ENCODE measurements at regions of chr1 and their contacts with region 1.

Region 1: DNA sequence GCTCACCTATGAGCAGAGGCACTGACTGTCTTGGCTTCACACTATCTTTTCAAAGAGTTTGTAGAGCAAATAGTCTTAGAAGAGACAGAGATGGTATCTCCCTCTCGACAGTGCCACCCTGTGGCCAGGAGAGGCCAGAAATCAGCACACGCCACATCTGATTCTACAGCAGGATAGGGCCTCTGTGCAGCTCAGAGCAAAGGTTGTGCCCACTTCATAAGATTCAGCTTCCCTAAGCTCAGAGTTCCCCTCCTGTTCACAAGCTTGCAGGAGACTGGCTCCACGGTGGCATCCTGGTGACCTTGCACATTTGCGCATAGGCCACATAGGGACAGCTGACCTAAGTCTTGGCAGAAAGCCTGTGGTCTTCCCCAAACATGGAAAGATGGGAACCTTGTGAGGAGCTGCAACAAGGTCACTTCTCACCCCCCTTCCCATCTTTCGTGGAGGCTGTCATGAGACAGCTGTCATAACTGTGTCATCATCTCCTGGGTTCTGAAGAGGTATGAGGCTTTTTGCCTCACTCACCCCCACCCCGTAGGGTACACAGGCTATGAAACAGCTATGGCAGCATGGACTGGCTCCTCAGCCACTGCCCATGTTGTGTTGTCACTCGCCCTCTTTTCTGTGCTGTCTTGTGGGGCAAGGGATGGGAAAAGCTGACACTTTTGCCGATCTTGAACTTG is 3.0 kb downstream of the ITLN2 start:
- DNase-seq: peak; percentile 52 to 70 (median 65)
- H3K4me3 ChIP-seq: no peak overlapping the region
- H3K4me3 Mint-ChIP-seq: no peak overlapping the region
- H3K27ac ChIP-seq: no peak overlapping the region
- H3K27ac Mint-ChIP-seq: no peak overlapping the region
- H3K4me1 ChIP-seq: no peaks in the 10 kb centered on the region
- H3K4me1 Mint-ChIP-seq: peaks cover 6 to 13% (median 7%) of the 10 kb centered on the region in 4 donors
- H3K27me3 ChIP-seq: no peaks in the 10 kb centered on the region
- H3K27me3 Mint-ChIP-seq: no peaks in the 10 kb centered on the region

Region 2: DNA sequence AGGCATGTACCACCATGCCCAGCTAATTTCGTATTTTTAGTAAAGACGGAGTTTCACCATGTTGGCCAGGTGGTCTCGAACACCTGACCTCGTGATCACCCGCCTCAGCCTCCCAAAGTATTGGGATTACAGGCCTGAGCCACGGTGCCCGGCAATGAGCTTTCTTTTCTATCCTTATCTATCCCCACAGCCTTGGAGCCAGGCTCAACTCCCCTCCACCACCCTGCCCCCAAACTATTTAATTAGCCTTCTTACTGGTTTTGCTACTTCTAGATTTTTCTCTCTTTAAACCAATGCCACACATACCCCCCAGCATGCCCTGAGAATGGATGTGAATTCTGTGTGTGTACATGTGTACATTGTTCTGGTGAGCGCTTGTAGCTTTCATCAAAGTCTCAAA is 556.9 kb before region 1 on chr1:
- CTCF ChIA-PET with region 1: no interaction called
- POLR2A ChIA-PET with region 1: no interaction called
- intact Hi-C with region 1: no loop called
- DNase-seq: no peak
- H3K4me3 ChIP-seq: no peak overlapping the region
- H3K4me3 Mint-ChIP-seq: no peak overlapping the region
- H3K27ac ChIP-seq: no peak overlapping the region
- H3K27ac Mint-ChIP-seq: no peak overlapping the region
- H3K4me1 ChIP-seq: peaks cover 1% of the 10 kb centered on the region
- H3K4me1 Mint-ChIP-seq: peaks cover 0 to 5% (median 0%) of the 10 kb centered on the region in 4 donors
- H3K27me3 ChIP-seq: no peaks in the 10 kb centered on the region
- H3K27me3 Mint-ChIP-seq: peaks cover 6 to 13% of the 10 kb centered on the region in 2 donors

Region 3: DNA sequence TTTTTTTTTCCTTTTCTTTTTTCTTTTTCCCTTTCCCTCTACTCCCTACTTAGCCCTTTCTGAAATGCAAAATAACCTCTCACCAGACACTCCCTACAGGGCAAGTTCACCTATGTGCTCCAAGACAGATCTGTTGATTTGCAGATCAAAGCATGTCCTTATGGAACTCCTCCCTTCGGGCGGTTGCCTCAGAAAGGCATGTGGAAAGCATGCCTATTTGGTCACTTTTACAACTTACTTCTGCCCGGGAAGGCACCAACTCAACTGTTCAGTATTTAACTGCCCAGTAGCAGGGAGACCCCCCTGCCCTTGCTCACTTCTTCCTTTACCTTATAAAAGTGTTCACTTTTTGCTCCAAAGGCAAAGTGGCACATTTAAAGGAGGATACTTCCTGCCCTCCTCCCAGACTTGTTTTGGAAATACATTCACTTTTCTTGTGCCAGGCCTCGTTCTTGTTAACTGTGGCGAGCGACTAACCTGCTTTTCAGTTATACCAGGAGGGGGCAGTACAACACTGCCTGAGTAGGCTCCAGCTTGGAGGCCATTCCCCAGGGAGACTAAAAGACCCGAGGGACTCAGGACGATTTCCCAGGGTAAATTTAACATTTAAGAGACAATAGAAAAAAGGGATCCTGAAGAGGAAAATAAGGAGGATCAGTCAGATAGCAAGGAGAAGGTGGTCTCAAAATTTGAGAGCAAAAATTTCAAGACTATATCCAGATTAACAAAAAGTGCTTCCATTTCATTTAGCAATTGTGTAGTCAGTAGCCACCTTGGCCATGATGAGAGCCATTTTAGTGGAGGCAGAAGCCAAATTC is 224.9 kb before region 1 on chr1:
- CTCF ChIA-PET with region 1: interaction called, 51 read pairs
- POLR2A ChIA-PET with region 1: no interaction called
- intact Hi-C with region 1: loop called (anchors 1 kb)
- DNase-seq: peak; percentile 67 to 76 (median 74)
- H3K4me3 ChIP-seq: no peak overlapping the region
- H3K4me3 Mint-ChIP-seq: no peak overlapping the region
- H3K27ac ChIP-seq: no peak overlapping the region
- H3K27ac Mint-ChIP-seq: no peak overlapping the region
- H3K4me1 ChIP-seq: peaks cover 24% of the 10 kb centered on the region
- H3K4me1 Mint-ChIP-seq: peaks cover 11 to 20% (median 15%) of the 10 kb centered on the region in 4 donors
- H3K27me3 ChIP-seq: no peaks in the 10 kb centered on the region
- H3K27me3 Mint-ChIP-seq: no peaks in the 10 kb centered on the region

Region 4: GRCh38 chr1:160830321-160831153 is 121.0 kb before region 1 on chr1:
- CTCF ChIA-PET with region 1: interaction called, 369 read pairs
- POLR2A ChIA-PET with region 1: interaction called, 14 read pairs
- intact Hi-C with region 1: loop called (anchors 1 kb)
- DNase-seq: peak; percentile 62 to 75 (median 70)
- H3K4me3 ChIP-seq: no peak overlapping the region
- H3K4me3 Mint-ChIP-seq: no peak overlapping the region
- H3K27ac ChIP-seq: no peak overlapping the region
- H3K27ac Mint-ChIP-seq: peak overlapping the region in 6 of 7 donors; percentile 74 to 86 (median 82)
- H3K4me1 ChIP-seq: peaks cover 6% of the 10 kb centered on the region
- H3K4me1 Mint-ChIP-seq: peaks cover 13 to 35% (median 24%) of the 10 kb centered on the region in 4 donors
- H3K27me3 ChIP-seq: no peaks in the 10 kb centered on the region
- H3K27me3 Mint-ChIP-seq: no peaks in the 10 kb centered on the region

Region 5: DNA sequence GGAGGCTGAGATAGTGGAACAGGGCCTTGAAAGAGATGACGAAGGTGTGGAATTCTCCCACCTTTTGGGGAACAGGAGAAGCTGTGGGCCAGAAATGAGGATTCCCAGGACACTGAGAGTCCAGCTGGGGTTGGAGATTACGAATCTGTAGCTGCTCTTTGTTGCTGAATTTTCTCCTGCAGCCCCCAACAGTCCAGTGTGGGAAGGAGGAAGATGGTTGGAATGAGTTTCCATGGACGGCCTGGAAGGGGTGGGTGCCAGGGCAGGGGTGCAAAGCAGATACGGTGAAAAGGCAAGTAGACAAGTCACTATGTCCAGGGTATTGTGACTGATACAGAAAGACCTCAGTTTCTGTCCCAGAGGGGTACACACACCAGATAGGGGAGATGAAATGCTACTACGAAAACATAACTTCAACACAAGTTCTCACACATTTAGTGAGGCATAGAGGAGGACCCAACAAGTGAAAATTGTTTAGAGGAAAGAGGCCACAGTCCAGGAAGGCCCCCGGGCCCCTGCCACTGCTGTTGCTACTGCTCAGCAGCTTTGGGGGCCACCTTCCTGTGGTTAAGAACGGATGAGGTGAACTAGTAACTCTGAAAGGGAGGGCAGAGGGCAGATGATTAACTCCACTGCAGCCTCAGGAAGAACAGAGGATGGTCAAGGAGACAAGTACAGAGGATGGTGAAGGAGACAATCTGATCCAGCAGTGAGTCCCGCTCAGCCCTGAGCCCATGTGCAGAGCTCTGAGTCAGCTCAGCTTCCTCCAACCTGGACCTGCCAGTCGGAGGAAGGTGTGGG is 96.2 kb before region 1 on chr1:
- CTCF ChIA-PET with region 1: interaction called, 12 read pairs
- POLR2A ChIA-PET with region 1: no interaction called
- intact Hi-C with region 1: no loop called
- DNase-seq: no peak
- H3K4me3 ChIP-seq: no peak overlapping the region
- H3K4me3 Mint-ChIP-seq: no peak overlapping the region
- H3K27ac ChIP-seq: no peak overlapping the region
- H3K27ac Mint-ChIP-seq: no peak overlapping the region
- H3K4me1 ChIP-seq: peaks cover 13% of the 10 kb centered on the region
- H3K4me1 Mint-ChIP-seq: peaks cover 0 to 8% (median 1%) of the 10 kb centered on the region in 4 donors
- H3K27me3 ChIP-seq: no peaks in the 10 kb centered on the region
- H3K27me3 Mint-ChIP-seq: no peaks in the 10 kb centered on the region

Region 6: DNA sequence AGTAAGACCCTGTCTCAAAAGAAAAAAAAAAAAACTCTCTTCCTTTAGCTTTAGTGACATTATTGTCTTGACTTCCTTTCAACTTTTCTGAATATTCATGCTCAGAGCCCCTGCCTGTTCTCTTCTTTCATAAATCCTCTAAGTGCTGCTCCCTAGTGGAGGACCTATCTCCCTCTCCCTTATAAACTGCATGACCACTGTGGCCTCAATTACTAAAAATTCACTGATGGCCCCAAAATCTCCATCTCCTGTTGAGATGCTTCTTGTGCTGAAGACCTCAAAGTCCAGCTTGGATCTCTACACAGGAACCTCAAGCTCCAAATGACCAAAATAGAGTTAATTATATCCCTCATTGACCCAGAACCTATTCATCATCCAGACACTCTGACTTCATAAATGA is 74.4 kb before region 1 on chr1:
- CTCF ChIA-PET with region 1: interaction called, 5 read pairs
- POLR2A ChIA-PET with region 1: no interaction called
- intact Hi-C with region 1: loop called (anchors 5 kb)
- DNase-seq: peak in 4 of 5 donors; percentile 45 to 56 (median 54)
- H3K4me3 ChIP-seq: no peak overlapping the region
- H3K4me3 Mint-ChIP-seq: peak overlapping the region in 1 of 8 donors; percentile 15
- H3K27ac ChIP-seq: no peak overlapping the region
- H3K27ac Mint-ChIP-seq: peak overlapping the region in 2 of 7 donors; percentile 1 to 2
- H3K4me1 ChIP-seq: peaks cover 7% of the 10 kb centered on the region
- H3K4me1 Mint-ChIP-seq: peaks cover 5 to 22% (median 6%) of the 10 kb centered on the region in 4 donors
- H3K27me3 ChIP-seq: no peaks in the 10 kb centered on the region
- H3K27me3 Mint-ChIP-seq: peaks cover 0 to 6% of the 10 kb centered on the region in 2 donors

Region 7: GRCh38 chr1:160916666-160917065 is 34.9 kb before region 1 on chr1:
- CTCF ChIA-PET with region 1: no interaction called
- POLR2A ChIA-PET with region 1: no interaction called
- intact Hi-C with region 1: no loop called
- DNase-seq: no peak
- H3K4me3 ChIP-seq: no peak overlapping the region
- H3K4me3 Mint-ChIP-seq: no peak overlapping the region
- H3K27ac ChIP-seq: no peak overlapping the region
- H3K27ac Mint-ChIP-seq: no peak overlapping the region
- H3K4me1 ChIP-seq: no peaks in the 10 kb centered on the region
- H3K4me1 Mint-ChIP-seq: no peaks in the 10 kb centered on the region
- H3K27me3 ChIP-seq: no peaks in the 10 kb centered on the region
- H3K27me3 Mint-ChIP-seq: peaks cover 9 to 11% of the 10 kb centered on the region in 2 donors

Region 8: GRCh38 chr1:160971618-160972056 is 20.1 kb after region 1 on chr1:
- CTCF ChIA-PET with region 1: interaction called, 12 read pairs
- POLR2A ChIA-PET with region 1: no interaction called
- intact Hi-C with region 1: no loop called
- DNase-seq: no peak
- H3K4me3 ChIP-seq: no peak overlapping the region
- H3K4me3 Mint-ChIP-seq: no peak overlapping the region
- H3K27ac ChIP-seq: no peak overlapping the region
- H3K27ac Mint-ChIP-seq: peak overlapping the region in 3 of 7 donors; percentile 30 to 77 (median 37)
- H3K4me1 ChIP-seq: no peaks in the 10 kb centered on the region
- H3K4me1 Mint-ChIP-seq: no peaks in the 10 kb centered on the region
- H3K27me3 ChIP-seq: no peaks in the 10 kb centered on the region
- H3K27me3 Mint-ChIP-seq: peaks cover 5 to 13% of the 10 kb centered on the region in 2 donors

Measured in CD4-positive, alpha-beta memory T cell (primary cell).